ENCODE measurements at regions of chr9 and their contacts with region 1.

Region 1: GRCh38 chr9:129174085-129174723 is 3.9 kb downstream of the IER5L start:
- DNase-seq: peak; percentile 98
- H3K4me3 ChIP-seq: peak overlapping the region; percentile 69 to 94 (median 88)
- H3K27ac ChIP-seq: peak overlapping the region; percentile 91 to 99 (median 94)
- H3K4me1 ChIP-seq: peaks cover 24 to 43% (median 38%) of the 10 kb centered on the region in 4 donors
- H3K27me3 ChIP-seq: no peaks in the 10 kb centered on the region
- CTCF ChIP-seq: peak; percentile 97 to 98 (median 98)
- EP300 ChIP-seq: no peak
- POLR2A ChIP-seq: no peak

Region 2: GRCh38 chr9:128892317-128892921 is 281.8 kb before region 1 on chr9:
- intact Hi-C with region 1: no loop called
- DNase-seq: peak; percentile 96
- H3K4me3 ChIP-seq: peak overlapping the region; percentile 31 to 52 (median 34)
- H3K27ac ChIP-seq: peak overlapping the region; percentile 80 to 88 (median 86)
- H3K4me1 ChIP-seq: peaks cover 42 to 69% (median 61%) of the 10 kb centered on the region in 4 donors
- H3K27me3 ChIP-seq: no peaks in the 10 kb centered on the region
- CTCF ChIP-seq: no peak
- EP300 ChIP-seq: no peak
- POLR2A ChIP-seq: no peak

Region 3: DNA sequence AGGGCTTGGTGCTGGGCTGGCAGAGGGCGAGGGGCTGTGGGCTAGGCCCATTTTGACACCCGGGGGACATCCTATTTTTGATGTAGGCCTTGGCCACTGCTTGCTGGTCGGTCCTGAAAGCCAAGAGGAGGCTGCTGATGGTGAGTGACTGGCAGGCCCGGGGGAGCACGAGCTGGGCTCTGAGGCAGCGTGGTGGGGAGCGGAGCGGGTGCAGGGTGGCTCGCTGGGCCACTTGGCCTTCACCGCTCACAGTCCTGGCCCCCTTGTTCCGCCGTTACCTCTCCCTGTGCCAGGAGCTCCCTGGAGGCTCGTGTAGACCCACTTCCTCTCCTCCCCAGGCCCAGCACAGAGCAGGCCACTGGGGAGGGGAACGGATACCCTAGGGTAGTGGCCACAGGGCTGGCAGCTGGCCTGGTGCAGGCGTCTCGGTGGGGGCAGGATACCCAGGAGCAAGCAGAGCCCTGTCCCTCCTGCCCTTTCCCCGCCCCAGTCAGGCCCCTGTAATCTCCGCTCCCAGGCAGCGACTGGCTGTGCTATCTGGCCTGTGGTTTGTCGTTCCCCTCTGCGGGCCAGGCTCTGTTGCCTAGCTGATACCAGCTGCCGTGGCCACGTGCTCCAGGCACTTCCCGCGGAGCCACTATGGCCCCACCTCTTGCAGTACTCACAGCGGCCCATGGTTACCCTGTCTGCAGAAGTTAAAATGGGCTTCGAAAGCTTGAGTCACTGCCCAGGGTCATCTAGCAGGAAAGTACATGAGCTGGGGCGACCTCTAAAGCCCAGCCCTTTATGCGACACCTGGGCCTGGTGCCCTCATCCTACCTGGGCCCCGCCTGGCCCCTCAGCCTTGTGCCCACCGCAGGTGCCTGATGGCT is 105.0 kb before region 1 on chr9:
- intact Hi-C with region 1: no loop called
- DNase-seq: no peak
- H3K4me3 ChIP-seq: no peak overlapping the region
- H3K27ac ChIP-seq: no peak overlapping the region
- H3K4me1 ChIP-seq: peaks cover 0 to 12% (median 0%) of the 10 kb centered on the region in 4 donors
- H3K27me3 ChIP-seq: no peaks in the 10 kb centered on the region
- CTCF ChIP-seq: no peak
- EP300 ChIP-seq: no peak
- POLR2A ChIP-seq: no peak

Region 4: GRCh38 chr9:129139993-129140396 is 34.2 kb before region 1 on chr9:
- intact Hi-C with region 1: loop called (anchors 2 kb)
- DNase-seq: peak; percentile 99
- H3K4me3 ChIP-seq: peak overlapping the region; percentile 47 to 60 (median 58)
- H3K27ac ChIP-seq: peak overlapping the region; percentile 93 to 99 (median 98)
- H3K4me1 ChIP-seq: peaks cover 68 to 80% (median 78%) of the 10 kb centered on the region in 4 donors
- H3K27me3 ChIP-seq: no peaks in the 10 kb centered on the region
- CTCF ChIP-seq: no peak
- EP300 ChIP-seq: peak; percentile 78
- POLR2A ChIP-seq: no peak

Region 5: DNA sequence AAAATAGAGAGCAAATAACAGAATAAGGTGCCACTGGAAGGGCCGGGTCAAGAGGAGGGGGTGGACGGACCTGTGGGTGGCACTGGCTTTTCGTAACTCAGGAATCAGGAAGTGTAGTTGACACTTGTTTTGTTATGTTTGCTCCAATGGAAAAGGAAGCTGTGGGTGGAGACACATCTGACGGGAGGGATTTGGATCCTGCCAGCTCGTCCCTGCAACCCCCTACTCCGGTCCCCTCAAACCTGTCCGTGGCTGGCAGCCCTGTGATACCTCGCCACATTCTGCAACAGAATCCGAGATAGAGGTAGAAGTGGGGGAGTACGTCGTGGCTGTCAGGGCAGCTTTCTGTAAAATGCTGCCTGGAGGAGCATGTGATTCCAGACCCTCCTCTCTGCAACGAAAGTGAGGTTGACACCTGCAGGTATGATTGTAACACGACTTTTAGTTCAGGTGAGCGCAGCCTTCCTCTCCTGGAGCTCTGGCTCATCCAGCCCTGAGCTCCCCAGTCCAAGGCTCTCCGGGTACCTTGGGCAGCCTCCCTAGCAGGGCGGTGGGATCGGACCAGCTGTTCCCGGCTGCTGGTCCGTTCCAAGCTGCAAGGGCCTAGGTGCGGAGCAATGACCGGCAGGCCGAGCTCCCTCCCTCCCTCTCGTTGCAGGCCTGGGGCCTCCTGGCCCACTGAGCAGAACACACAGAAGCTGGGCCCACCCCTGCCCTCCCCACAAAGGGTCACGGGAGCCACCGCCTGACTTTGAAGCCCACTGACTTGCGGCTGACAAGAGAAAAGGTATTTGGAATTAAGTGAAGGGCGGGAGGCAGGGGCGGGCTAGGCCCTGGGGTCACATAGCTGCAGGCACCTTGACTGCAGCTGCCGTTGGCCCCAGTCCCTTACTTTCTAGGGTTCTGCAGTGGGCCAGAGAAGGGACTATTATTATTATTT is 108.3 kb after region 1 on chr9:
- intact Hi-C with region 1: no loop called
- DNase-seq: peak; percentile 90
- H3K4me3 ChIP-seq: peak overlapping the region; percentile 42 to 57 (median 46)
- H3K27ac ChIP-seq: peak overlapping the region; percentile 41 to 54 (median 47)
- H3K4me1 ChIP-seq: peaks cover 0 to 6% (median 4%) of the 10 kb centered on the region in 4 donors
- H3K27me3 ChIP-seq: no peaks in the 10 kb centered on the region
- CTCF ChIP-seq: no peak
- EP300 ChIP-seq: no peak
- POLR2A ChIP-seq: no peak

Region 6: DNA sequence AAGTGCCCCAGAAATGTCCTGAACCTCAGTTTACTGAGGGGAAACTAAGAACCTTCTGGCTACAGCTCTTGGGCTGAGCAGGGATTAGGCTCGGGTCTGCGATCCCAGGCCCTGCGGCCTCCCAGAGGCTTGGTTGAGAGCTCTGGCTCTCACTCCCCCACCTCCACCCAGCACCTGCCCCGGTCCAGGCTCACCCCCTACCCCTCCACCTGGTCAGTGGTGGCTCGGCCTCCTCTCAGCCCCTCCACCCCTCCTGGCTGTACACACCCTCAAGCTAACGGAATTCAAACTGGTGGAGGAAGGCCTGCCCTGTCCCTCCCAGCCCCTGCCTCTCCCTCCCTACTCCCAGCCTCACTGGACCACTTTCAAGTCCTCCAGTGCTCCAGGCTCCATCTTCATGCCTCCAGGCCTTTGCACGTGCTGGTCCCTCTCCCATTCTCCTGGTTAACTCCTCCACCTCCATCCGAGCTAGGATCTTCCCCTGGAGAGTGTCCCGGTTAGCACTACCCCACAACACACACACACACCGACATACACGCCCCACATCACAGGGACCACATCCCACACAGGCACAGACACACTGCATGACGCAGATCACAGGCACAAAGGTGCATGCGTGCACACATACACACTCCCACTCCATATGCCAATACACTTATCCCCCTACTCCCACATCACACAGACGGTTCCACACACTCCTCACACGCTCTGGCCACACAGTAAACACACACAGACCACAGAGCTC is 315.8 kb after region 1 on chr9:
- intact Hi-C with region 1: loop called (anchors 2 kb)
- DNase-seq: no peak
- H3K4me3 ChIP-seq: peak overlapping the region; percentile 59 to 62 (median 62)
- H3K27ac ChIP-seq: peak overlapping the region; percentile 97 to 100 (median 98)
- H3K4me1 ChIP-seq: peaks cover 78 to 100% (median 97%) of the 10 kb centered on the region in 4 donors
- H3K27me3 ChIP-seq: no peaks in the 10 kb centered on the region
- CTCF ChIP-seq: no peak
- EP300 ChIP-seq: no peak
- POLR2A ChIP-seq: no peak

Measured in esophagus muscularis mucosa (tissue), 4 donors.